HepG2 (cell line): ENCODE measurements at regions of chr22 and their contacts with region 1.

Region 1: GRCh38 chr22:19970479-19971275 is 29.1 kb upstream of the TXNRD2 start:
- DNase-seq: peak; percentile 53
- ATAC-seq: peak; percentile 67
- H3K4me3 ChIP-seq: peak overlapping the region in 1 of 3 experiments; percentile 22; a peak in 1 of 6 replicates
- H3K27ac ChIP-seq: peak overlapping the region; percentile 79
- H3K4me1 ChIP-seq: peaks cover 52% of the 10 kb centered on the region
- H3K27me3 ChIP-seq: no peaks in the 10 kb centered on the region
- CTCF ChIP-seq: peak; percentile 94
- EP300 ChIP-seq: peak in 1 of 2 experiments; percentile 55; a peak in 2 of 4 replicates
- POLR2A ChIP-seq: no peak; a peak in 1 of 4 replicates
- RAD21 ChIP-seq: peak; percentile 85

Region 2: GRCh38 chr22:19955241-19956128 is 15.2 kb before region 1 on chr22:
- CTCF ChIA-PET with region 1: interaction called, 7 read pairs
- POLR2A ChIA-PET with region 1: interaction called, 13 read pairs
- in situ Hi-C with region 1: no loop called
- intact Hi-C with region 1: no loop called
- DNase-seq: no peak
- ATAC-seq: no peak
- H3K4me3 ChIP-seq: no peak overlapping the region
- H3K27ac ChIP-seq: no peak overlapping the region
- H3K4me1 ChIP-seq: peaks cover 64% of the 10 kb centered on the region
- H3K27me3 ChIP-seq: no peaks in the 10 kb centered on the region
- CTCF ChIP-seq: no peak
- EP300 ChIP-seq: no peak
- POLR2A ChIP-seq: no peak
- RAD21 ChIP-seq: no peak

Region 3: GRCh38 chr22:20001315-20001638 is 30.6 kb after region 1 on chr22:
- CTCF ChIA-PET with region 1: no interaction called
- POLR2A ChIA-PET with region 1: no interaction called
- in situ Hi-C with region 1: no loop called
- intact Hi-C with region 1: no loop called
- DNase-seq: no peak
- ATAC-seq: no peak
- H3K4me3 ChIP-seq: no peak overlapping the region
- H3K27ac ChIP-seq: peak overlapping the region; percentile 64
- H3K4me1 ChIP-seq: peaks cover 43% of the 10 kb centered on the region
- H3K27me3 ChIP-seq: 0 out of 5 replicates have a peak, but pooled peaks cover 0 to 1% of the 10 kb centered on the region in 2 experiments
- CTCF ChIP-seq: no peak
- EP300 ChIP-seq: no peak
- POLR2A ChIP-seq: no peak
- RAD21 ChIP-seq: no peak

Region 4: DNA sequence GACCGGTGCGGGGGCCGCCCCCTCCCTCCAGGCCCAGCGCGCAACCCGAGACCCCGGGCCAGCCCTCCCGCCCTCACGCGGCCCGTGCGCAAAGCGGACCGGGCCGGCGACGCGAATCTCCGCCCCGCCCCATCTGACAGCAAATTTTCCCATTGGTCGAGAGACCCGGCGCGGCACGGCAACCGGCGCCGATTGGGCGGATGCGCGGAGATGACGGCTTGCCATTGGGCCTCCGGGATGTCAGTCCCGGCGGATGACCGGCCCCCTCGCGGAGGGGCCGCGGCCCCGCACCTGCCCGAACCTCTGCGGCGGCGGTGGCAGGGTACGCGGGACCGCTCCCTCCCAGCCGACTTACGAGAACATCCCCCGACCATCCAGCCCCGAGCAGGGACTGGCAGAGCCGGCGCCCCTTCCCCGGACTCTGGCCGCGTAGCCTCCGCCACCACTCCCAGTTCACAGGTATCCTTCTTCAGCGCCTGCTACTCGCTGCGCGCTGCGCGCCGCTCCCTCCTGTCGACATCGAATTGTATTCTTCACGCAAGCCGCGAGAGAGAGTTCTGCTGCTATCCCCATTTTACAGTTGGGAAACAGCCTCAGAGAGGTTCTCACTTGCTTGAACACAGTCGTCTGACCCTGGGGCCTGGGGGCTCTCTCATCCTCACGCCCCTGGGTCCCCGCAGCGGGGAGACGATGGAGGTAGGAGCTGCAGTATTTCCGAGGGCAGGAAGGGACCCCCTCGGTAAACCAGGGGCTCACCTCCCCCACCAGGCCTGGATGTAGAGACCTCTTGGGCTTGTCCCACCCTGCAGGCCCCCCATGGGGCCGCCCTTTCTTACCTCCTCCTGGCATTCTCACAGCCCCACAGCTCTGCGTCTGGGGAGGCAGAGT is 46.3 kb after region 1 on chr22 and contains the start of gene ARVCF:
- CTCF ChIA-PET with region 1: interaction called, 35 read pairs
- POLR2A ChIA-PET with region 1: interaction called, 7 read pairs
- in situ Hi-C with region 1: loop called (anchors 5 kb)
- intact Hi-C with region 1: loop called (anchors 1 kb)
- DNase-seq: peak; percentile 81
- ATAC-seq: peak; percentile 65
- H3K4me3 ChIP-seq: peak within 1 kb of the TSS; percentile 67 to 81 (median 81)
- H3K27ac ChIP-seq: peak within 1 kb of the TSS; percentile 38
- H3K4me1 ChIP-seq: peaks cover 63% of the 10 kb centered on the region
- H3K27me3 ChIP-seq: peaks cover 0 to 5% of the 10 kb centered on the region in 2 experiments; a peak in 2 of 5 replicates
- CTCF ChIP-seq: no peak; the same call in 1 of the 2 replicates
- EP300 ChIP-seq: no peak
- POLR2A ChIP-seq: peak in 1 of 2 experiments; percentile 70; a peak in 2 of 4 replicates
- RAD21 ChIP-seq: no peak
- total RNA-seq, gene ARVCF: 10.4 and 17.7 TPM in 2 replicates

Region 5: GRCh38 chr22:20027966-20028854 is 57.5 kb after region 1 on chr22:
- CTCF ChIA-PET with region 1: interaction called, 12 read pairs
- POLR2A ChIA-PET with region 1: no interaction called
- in situ Hi-C with region 1: no loop called
- intact Hi-C with region 1: no loop called
- DNase-seq: no peak
- ATAC-seq: peak; percentile 30; the same call in 1 of the 3 replicates
- H3K4me3 ChIP-seq: no peak overlapping the region
- H3K27ac ChIP-seq: no peak overlapping the region
- H3K4me1 ChIP-seq: no peaks in the 10 kb centered on the region
- H3K27me3 ChIP-seq: no peaks in the 10 kb centered on the region
- CTCF ChIP-seq: peak; percentile 29
- EP300 ChIP-seq: no peak
- POLR2A ChIP-seq: no peak
- RAD21 ChIP-seq: no peak